Posterior cingulate gyrus (tissue), 11 donors: ENCODE measurements at regions of chr7 and their contacts with region 1.

Region 1: GRCh38 chr7:152336754-152337368 is 98.9 kb downstream of the KMT2C start:
- DNase-seq: no peak

Region 2: DNA sequence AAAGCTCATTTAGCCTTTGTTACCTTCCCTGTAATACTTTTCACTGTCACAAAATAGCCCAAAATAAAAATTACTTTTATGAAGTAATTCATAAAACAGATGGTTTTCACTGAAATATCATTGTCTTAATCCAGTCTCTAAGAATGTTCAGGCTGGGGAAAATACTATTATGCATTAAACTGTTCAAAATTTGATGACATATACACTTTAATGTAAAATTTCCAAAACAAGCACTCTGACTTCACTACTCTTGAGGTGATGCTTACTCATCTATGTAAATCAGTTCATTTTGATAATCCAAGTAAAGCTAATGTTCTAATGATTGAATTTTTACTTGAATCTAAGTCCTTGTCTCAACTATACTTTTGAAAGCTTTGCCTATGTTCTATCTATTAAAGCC is 29.0 kb before region 1 on chr7:
- intact Hi-C with region 1: no loop called
- DNase-seq: no peak

Region 3: DNA sequence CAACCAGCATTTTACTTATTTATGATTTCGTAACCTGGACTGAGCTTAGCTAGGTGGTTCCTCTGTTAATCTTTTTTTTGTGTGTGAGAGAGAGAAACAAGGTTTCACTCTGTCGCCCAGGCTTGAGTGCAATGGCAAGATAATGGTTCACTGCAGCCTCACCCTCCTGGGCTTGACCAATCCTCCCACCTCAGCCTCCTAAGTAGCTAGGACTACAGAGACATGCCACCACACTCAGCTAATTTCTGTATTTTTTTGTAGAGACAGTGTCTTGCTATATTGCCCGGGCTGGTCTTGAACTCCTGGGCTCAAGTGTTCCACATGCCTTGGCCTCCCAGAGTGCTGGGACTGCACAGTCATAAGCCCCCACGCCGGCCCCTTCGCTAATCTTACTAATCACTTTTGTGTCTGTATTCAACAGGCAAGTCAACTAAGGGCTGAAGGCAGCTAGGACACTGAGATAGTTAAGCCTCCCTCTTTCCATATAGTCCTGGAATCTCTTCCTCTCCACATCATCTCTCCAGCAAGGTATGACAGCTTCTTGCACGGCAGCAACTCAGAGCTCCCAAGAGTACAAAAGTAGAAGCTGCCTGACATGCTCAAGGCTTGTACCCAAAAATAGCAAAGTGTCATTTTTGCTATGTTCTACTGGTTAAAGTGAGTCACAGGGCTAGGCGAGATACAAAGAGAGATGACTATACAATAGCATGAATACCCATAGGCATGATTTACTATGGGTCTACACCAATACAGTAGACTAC is 87.7 kb after region 1 on chr7:
- intact Hi-C with region 1: loop called (anchors 5 kb)
- DNase-seq: no peak

Region 4: GRCh38 chr7:152709287-152710152 is 372.7 kb after region 1 on chr7:
- intact Hi-C with region 1: loop called (anchors 5 kb)
- DNase-seq: no peak